ENCODE measurements at regions of chr9 and their contacts with region 1.

Region 1: DNA sequence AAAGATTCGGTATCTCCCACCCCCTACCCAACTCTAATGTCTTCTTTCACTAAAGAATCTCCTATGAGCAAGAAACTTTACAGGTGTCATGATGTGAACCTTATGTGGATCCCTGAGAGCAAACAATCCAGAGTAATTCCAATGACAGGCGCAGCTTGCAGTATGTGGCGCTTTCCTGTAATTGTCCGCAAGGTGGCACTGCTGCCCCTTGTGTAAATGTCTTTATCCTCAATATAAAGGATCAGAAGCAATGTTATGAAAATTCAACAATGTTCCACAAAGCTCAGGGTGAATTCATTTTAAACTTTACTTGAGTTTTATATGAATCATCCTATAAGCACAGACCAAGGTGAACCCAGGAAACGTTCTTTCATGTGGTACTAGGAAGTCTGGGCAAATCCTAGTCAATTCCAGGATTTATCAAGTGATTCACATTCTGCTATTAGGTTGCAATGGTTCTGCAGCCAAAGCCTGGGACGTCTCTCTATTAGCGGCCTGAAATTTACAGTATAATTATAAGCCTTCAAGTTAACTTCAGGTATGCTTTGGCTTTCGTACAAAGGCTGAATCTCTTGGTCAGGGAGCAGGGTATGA is 113.7 kb downstream of the TRPM6 start:
- DNase-seq: peak; percentile 67
- ATAC-seq: peak; percentile 70
- H3K4me3 ChIP-seq: no peak overlapping the region
- H3K27ac ChIP-seq: no peak overlapping the region
- H3K4me1 ChIP-seq: peaks cover 0 to 6% of the 10 kb centered on the region in 2 experiments; a peak in 2 of 4 replicates
- H3K27me3 ChIP-seq: no peaks in the 10 kb centered on the region
- CTCF ChIP-seq: peak; percentile 77 to 96 (median 78)
- POLR2A ChIP-seq: no peak
- RAD21 ChIP-seq: peak; percentile 92

Region 2: DNA sequence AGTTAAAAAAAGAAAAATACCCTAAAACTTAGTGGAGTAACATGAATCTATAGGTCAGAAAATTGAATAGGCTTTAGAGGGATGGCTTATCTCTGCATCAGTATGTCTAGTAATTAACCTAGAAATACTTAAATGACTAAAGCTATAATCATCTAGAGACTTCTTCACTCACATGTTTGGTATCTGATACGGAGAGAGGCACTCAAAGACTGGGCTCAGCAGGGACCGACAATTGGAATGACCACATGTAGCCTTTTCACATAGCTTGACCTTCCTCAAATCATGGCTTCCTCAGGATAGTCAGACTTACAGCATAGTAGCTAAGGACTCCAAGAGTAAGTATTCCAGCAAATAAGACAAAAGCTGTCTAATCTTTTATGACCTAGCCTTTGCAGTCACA is 382.2 kb before region 1 on chr9:
- CTCF ChIA-PET with region 1: no interaction called
- POLR2A ChIA-PET with region 1: no interaction called
- RAD21 ChIA-PET with region 1: no interaction called
- intact Hi-C with region 1: no loop called
- DNase-seq: no peak
- ATAC-seq: no peak
- H3K4me3 ChIP-seq: no peak overlapping the region
- H3K27ac ChIP-seq: no peak overlapping the region
- H3K4me1 ChIP-seq: no peaks in the 10 kb centered on the region
- H3K27me3 ChIP-seq: no peaks in the 10 kb centered on the region
- CTCF ChIP-seq: no peak
- POLR2A ChIP-seq: no peak
- RAD21 ChIP-seq: no peak

Region 3: GRCh38 chr9:74666625-74667316 is 107.2 kb before region 1 on chr9:
- CTCF ChIA-PET with region 1: no interaction called
- POLR2A ChIA-PET with region 1: no interaction called
- RAD21 ChIA-PET with region 1: no interaction called
- intact Hi-C with region 1: no loop called
- DNase-seq: no peak
- ATAC-seq: no peak
- H3K4me3 ChIP-seq: no peak overlapping the region
- H3K27ac ChIP-seq: no peak overlapping the region
- H3K4me1 ChIP-seq: no peaks in the 10 kb centered on the region
- H3K27me3 ChIP-seq: peaks cover 17% of the 10 kb centered on the region; the same call in 1 of the 2 replicates
- CTCF ChIP-seq: no peak
- POLR2A ChIP-seq: no peak
- RAD21 ChIP-seq: no peak

Region 4: GRCh38 chr9:74824654-74825053 is 50.7 kb after region 1 on chr9:
- CTCF ChIA-PET with region 1: no interaction called
- POLR2A ChIA-PET with region 1: no interaction called
- RAD21 ChIA-PET with region 1: no interaction called
- intact Hi-C with region 1: no loop called
- DNase-seq: no peak
- ATAC-seq: no peak
- H3K4me3 ChIP-seq: no peak overlapping the region
- H3K27ac ChIP-seq: no peak overlapping the region
- H3K4me1 ChIP-seq: no peaks in the 10 kb centered on the region
- H3K27me3 ChIP-seq: no peaks in the 10 kb centered on the region
- CTCF ChIP-seq: no peak
- POLR2A ChIP-seq: no peak
- RAD21 ChIP-seq: no peak

Region 5: GRCh38 chr9:74935008-74935407 is 161.0 kb after region 1 on chr9:
- CTCF ChIA-PET with region 1: no interaction called
- POLR2A ChIA-PET with region 1: no interaction called
- RAD21 ChIA-PET with region 1: no interaction called
- intact Hi-C with region 1: no loop called
- DNase-seq: no peak
- ATAC-seq: no peak
- H3K4me3 ChIP-seq: no peak overlapping the region
- H3K27ac ChIP-seq: no peak overlapping the region
- H3K4me1 ChIP-seq: no peaks in the 10 kb centered on the region
- H3K27me3 ChIP-seq: no peaks in the 10 kb centered on the region
- CTCF ChIP-seq: no peak
- POLR2A ChIP-seq: no peak
- RAD21 ChIP-seq: no peak

Region 6: GRCh38 chr9:74952281-74953151 is 178.5 kb after region 1 on chr9 and contains the start of gene C9orf40:
- CTCF ChIA-PET with region 1: interaction called, 19 read pairs
- POLR2A ChIA-PET with region 1: no interaction called
- RAD21 ChIA-PET with region 1: no interaction called
- intact Hi-C with region 1: loop called (anchors 5 kb)
- DNase-seq: peak; percentile 81
- ATAC-seq: peak; percentile 88
- H3K4me3 ChIP-seq: peak within 1 kb of the TSS; percentile 86 to 89
- H3K27ac ChIP-seq: peak within 1 kb of the TSS; percentile 99
- H3K4me1 ChIP-seq: peaks cover 3 to 15% of the 10 kb centered on the region in 2 experiments; a peak in 2 of 4 replicates
- H3K27me3 ChIP-seq: no peaks in the 10 kb centered on the region
- CTCF ChIP-seq: peak in 2 of 3 experiments; percentile 66 to 82; a peak in 4 of 6 replicates
- POLR2A ChIP-seq: no peak
- RAD21 ChIP-seq: 0 out of 2 replicates have a peak, but pooled peaks have one; percentile 12
- total RNA-seq, gene C9orf40: 12.8 TPM

Region 7: GRCh38 chr9:75027187-75028107 is 253.5 kb after region 1 on chr9:
- CTCF ChIA-PET with region 1: interaction called, 13 read pairs
- POLR2A ChIA-PET with region 1: interaction called, 3 read pairs
- RAD21 ChIA-PET with region 1: no interaction called
- intact Hi-C with region 1: no loop called
- DNase-seq: peak; percentile 2
- ATAC-seq: peak; percentile 60
- H3K4me3 ChIP-seq: peak overlapping the region; percentile 82 to 89
- H3K27ac ChIP-seq: peak overlapping the region; percentile 96
- H3K4me1 ChIP-seq: peaks cover 3 to 19% of the 10 kb centered on the region in 2 experiments; a peak in 3 of 4 replicates
- H3K27me3 ChIP-seq: no peaks in the 10 kb centered on the region
- CTCF ChIP-seq: 0 out of 6 replicates have a peak, but pooled peaks of 1 of the 3 experiments have one; percentile 9
- POLR2A ChIP-seq: no peak
- RAD21 ChIP-seq: no peak

Region 8: DNA sequence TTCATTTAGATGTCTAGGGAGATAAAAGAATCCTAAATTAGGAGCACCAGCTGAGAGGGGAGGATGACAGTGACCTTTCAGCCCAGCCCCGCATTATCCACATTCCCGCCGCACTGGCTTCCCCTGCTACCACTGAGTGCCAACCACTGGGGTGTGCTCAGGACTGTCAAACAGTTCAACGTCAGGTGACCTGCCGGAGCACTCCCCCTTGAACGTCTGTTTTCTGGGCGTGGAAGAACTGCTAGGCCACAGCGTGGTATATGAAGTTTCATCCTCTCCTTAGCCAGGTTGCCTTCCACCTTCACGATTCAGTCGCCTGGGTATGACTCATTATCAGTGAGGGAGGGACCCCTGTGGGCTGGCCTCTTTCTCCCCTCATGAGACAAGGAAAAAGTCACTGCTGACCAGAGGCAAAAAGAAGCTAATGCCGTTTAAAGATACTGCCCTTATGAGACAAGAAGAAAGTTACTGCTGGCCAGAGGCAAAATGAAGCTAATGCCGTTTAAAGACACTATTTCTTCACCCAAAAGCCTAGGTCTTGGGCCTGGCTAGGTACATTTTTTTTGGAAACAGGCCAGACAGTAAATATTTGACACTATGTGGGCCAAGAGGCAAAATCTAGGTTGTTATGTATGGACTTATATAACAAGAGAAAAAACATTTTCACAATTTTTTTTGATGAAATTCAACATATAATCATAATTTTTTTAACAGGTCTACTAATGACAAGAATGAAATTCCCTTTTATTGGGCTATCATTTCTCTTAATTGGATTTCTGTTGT is 309.4 kb after region 1 on chr9:
- CTCF ChIA-PET with region 1: interaction called, 10 read pairs
- POLR2A ChIA-PET with region 1: no interaction called
- RAD21 ChIA-PET with region 1: interaction called in 1 of 2 experiments, 3 read pairs
- intact Hi-C with region 1: no loop called
- DNase-seq: no peak
- ATAC-seq: peak; percentile 35
- H3K4me3 ChIP-seq: no peak overlapping the region
- H3K27ac ChIP-seq: no peak overlapping the region
- H3K4me1 ChIP-seq: peaks cover 16 to 31% of the 10 kb centered on the region in 2 experiments; a peak in 3 of 4 replicates
- H3K27me3 ChIP-seq: no peaks in the 10 kb centered on the region
- CTCF ChIP-seq: no peak
- POLR2A ChIP-seq: no peak
- RAD21 ChIP-seq: 0 out of 2 replicates have a peak, but pooled peaks have one; percentile 11

Region 9: GRCh38 chr9:75238311-75238978 is 464.5 kb after region 1 on chr9:
- CTCF ChIA-PET with region 1: no interaction called
- POLR2A ChIA-PET with region 1: no interaction called
- RAD21 ChIA-PET with region 1: no interaction called
- intact Hi-C with region 1: loop called (anchors 2 kb)
- DNase-seq: peak; percentile 62
- ATAC-seq: peak; percentile 99
- H3K4me3 ChIP-seq: no peak overlapping the region
- H3K27ac ChIP-seq: no peak overlapping the region
- H3K4me1 ChIP-seq: no peaks in the 10 kb centered on the region
- H3K27me3 ChIP-seq: no peaks in the 10 kb centered on the region
- CTCF ChIP-seq: peak; percentile 53 to 68 (median 66); a peak in 5 of 6 replicates
- POLR2A ChIP-seq: no peak
- RAD21 ChIP-seq: peak; percentile 70

Measured in HCT116 (cell line).